AG04449 (cell line): ENCODE measurements at regions of chr12 and their contacts with region 1.

Region 1: GRCh38 chr12:89352492-89353187 is at the start of gene DUSP6:
- DNase-seq: peak; percentile 96
- H3K4me3 ChIP-seq: peak within 1 kb of the TSS; percentile 88
- CTCF ChIP-seq: no peak

Region 2: GRCh38 chr12:89383235-89384049 is 30.8 kb after region 1 on chr12:
- CTCF ChIA-PET with region 1: no interaction called
- POLR2A ChIA-PET with region 1: no interaction called
- DNase-seq: no peak
- H3K4me3 ChIP-seq: no peak overlapping the region
- CTCF ChIP-seq: no peak

Region 3: GRCh38 chr12:89451841-89452251 is 99.2 kb after region 1 on chr12:
- CTCF ChIA-PET with region 1: interaction called, 3 read pairs
- POLR2A ChIA-PET with region 1: interaction called, 27 read pairs
- DNase-seq: peak; percentile 62
- H3K4me3 ChIP-seq: no peak overlapping the region
- CTCF ChIP-seq: no peak